ENCODE measurements at regions of chr20 and their contacts with region 1.

Region 1: DNA sequence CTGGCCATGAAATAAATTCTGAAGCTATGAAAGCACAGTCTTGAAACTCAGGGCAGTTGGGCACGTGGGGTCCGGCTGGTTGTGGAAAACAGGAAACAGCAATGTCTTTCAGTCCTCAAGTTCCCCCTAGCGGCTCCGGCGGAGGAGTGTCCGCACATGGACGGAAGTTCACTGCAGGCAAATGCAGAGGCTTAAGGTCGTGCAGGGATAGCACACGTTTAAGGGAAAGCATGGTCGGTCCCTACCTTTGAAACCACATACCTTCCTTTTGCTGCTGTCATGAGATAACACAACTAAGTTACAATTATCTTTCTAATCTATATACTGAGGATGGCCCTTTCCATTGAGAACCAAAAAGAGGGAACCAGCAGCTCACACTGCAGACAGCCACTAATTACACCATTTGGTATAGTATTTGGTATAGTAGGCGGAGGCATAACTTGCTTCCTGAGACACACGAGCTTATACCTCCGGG is 52.6 kb upstream of the NFATC2 start:
- DNase-seq: peak; percentile 89 to 95 (median 93)
- ATAC-seq: peak; percentile 95 to 97
- H3K4me3 ChIP-seq: no peak overlapping the region
- H3K27ac ChIP-seq: no peak overlapping the region
- H3K4me1 ChIP-seq: no peaks in the 10 kb centered on the region
- H3K27me3 ChIP-seq: no peaks in the 10 kb centered on the region

Region 2: DNA sequence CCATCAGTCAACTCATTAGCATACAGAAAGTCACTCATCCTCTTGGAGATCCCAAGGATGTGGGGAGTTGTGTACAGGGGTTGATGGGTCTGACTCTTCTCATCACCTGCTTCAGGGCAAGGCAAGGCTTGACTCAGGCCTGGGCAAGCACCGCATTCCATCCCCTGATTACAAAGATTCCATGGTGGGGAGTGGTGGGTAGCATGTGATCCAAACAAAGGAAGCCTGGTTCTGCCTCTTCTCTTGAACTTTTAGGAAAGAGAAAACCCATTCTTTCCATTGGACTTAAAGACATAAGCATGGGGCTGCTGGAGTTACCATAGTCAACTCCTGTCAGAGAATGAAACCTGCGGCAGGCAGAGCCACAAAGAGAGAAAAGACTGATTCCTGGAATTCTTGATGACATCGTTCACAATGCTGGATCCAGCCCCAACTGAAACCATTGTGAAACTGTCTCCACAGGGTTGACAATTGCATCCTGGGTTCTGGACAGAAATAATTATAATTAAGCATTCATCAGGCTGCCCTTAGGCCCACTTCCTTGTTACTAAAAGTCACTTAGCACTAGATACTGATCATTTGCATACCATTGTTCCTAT is 336.4 kb before region 1 on chr20:
- intact Hi-C with region 1: no loop called
- DNase-seq: no peak
- ATAC-seq: no peak
- H3K4me3 ChIP-seq: no peak overlapping the region
- H3K27ac ChIP-seq: no peak overlapping the region
- H3K4me1 ChIP-seq: no peaks in the 10 kb centered on the region
- H3K27me3 ChIP-seq: no peaks in the 10 kb centered on the region

Region 3: DNA sequence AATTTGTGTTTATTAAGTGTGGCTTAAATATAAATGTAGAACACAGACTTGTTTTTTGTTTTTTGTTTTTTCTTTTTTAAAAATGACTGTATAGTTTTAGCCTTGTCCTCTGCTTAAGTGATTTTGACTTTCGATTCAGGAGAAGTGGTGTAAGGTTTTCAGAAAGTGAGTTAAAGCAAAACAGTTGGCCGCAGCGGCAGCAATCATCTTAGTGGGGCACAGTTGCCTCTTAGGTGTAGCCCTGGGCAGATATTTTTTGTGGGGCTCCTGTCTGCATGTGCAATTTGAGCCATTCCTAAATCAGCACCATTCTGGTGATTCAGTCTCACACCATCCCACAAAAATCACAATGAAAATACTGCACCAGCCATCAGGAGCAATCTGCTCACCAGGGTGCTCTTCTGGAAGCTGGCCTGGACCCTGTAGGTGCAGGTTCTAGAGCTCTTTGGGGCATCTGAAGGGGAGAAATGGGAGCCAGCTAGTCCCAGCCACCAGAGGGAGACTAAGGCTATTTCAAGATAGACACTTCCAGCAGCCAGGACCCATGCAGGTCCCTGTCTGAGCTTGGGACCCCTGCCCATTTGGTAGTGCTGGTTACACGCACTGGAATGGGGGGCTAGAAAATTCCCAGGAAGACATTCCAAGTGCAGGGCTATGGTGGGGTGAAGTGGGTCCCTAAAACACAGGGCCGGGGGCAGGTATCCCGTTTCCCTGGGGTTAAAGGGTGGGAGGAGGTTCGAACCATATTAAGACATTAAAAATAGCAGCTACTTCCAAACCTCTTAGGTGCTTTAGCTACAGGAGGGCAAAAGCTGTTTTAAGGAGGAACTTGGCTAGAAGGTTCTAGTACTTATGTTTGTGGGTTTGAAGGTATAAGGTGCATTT is 209.2 kb before region 1 on chr20:
- intact Hi-C with region 1: loop called in 1 of 4 experiments (anchors 5 kb)
- DNase-seq: no peak
- ATAC-seq: peak; percentile 17 to 19
- H3K4me3 ChIP-seq: no peak overlapping the region
- H3K27ac ChIP-seq: no peak overlapping the region
- H3K4me1 ChIP-seq: no peaks in the 10 kb centered on the region
- H3K27me3 ChIP-seq: no peaks in the 10 kb centered on the region

Region 4: DNA sequence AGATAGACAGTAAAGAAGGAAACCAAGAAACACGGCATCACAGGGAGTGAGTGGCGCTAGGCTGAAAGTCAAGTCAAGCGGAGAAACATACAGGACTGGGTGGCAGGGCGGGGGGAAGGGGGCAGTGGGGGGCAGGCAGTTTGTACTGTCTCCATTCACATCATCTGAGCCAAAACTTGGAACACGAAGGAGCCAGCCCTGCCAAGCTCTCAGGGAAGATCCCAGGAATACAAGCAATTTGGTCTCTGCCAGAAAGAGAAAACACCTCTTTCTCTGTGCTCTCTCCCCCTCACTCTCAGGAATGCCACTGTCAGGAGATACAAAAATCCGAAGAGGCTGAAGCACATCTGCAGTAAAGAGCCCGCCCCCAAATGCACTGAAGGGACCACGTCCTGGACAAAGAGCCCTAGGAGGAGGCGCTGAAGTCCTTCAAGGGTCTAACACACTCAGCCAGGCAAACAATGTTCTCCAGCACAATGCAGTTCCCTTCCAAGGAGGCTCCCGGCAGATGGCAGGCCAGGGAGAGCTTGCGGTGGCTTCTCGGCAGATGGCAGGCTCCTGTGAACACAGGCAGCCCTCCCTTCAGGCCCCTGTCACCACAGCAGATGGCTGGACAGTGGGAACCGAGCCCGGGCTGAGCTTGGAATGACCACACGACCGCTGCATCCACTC is 83.1 kb after region 1 on chr20:
- intact Hi-C with region 1: no loop called
- DNase-seq: peak; percentile 37 to 66 (median 61)
- ATAC-seq: peak; percentile 55 to 60
- H3K4me3 ChIP-seq: no peak overlapping the region
- H3K27ac ChIP-seq: no peak overlapping the region
- H3K4me1 ChIP-seq: no peaks in the 10 kb centered on the region
- H3K27me3 ChIP-seq: no peaks in the 10 kb centered on the region

Measured in right cardiac atrium (tissue), 5 donors.